Cardiac septum (tissue), 1 donor: ENCODE measurements at regions of chr12 and their contacts with region 1.

Region 1: GRCh38 chr12:21773263-21773741 is 1.2 kb downstream of the KCNJ8 start:
- DNase-seq: peak; percentile 82

Region 2: DNA sequence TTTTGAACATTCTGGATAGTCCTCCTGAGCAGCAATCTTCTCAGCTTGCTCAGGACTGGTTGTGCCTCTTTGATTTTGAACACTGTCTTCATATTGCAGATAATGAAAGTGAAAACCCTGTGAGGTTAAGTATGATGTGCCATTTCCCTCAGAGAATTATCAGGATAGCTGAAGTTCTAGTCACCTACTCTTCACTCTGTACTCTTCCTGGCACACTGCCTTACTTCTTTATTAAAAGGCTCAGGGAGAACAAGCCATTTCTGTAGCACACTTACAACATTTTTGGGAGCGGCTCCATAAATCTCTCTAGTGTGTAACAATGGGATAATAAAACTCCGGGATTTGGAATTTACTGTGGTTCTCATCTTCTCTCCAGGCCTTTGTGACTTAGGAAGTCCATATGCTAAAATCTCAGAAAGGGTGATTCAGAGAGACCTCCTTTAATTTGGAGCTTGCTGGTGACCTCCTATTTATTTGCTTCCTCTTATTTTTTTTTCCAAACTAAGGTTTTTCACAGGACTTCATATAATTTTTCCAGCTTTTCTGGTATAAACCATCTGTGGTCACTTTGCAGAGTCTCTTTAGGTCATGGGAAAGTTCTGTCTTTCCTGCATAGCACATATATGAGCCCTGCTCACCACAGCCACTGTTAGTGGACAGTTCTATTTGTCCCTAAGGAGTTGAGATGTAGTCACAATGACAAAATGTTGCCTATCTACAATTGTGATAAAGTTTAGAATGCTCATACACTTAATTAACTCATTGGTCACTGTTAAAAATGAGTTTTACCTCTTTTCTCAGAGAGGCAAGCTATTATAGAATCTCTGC is 62.1 kb before region 1 on chr12:
- intact Hi-C with region 1: loop called (anchors 5 kb)
- DNase-seq: no peak

Region 3: DNA sequence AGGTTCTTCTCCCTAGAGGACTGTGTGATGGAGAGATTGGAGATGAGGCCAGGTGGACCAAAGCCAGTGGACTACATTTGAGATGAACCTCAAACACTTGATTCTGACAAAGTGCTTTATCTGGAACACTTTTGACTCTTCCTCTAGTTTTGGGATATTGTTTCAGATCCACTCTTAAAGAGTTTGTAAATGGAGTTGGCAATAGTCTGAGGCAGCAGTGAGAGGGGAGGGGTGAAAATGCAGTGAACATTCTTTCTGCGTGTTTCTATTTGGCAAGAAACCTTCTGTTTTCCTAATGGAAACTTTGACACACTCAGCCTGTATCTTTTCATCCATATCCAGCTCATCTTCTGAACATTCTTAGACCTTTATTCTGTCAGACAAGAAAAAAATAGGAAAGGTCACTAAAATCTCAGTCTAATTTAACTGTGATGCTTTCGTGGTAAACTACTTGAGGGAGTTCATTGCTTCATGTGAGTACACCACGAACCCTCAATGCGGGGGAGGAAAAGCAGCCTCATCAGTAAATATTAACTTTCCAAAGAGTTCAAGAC is 58.6 kb after region 1 on chr12:
- intact Hi-C with region 1: loop called (anchors 5 kb)
- DNase-seq: no peak

Region 4: DNA sequence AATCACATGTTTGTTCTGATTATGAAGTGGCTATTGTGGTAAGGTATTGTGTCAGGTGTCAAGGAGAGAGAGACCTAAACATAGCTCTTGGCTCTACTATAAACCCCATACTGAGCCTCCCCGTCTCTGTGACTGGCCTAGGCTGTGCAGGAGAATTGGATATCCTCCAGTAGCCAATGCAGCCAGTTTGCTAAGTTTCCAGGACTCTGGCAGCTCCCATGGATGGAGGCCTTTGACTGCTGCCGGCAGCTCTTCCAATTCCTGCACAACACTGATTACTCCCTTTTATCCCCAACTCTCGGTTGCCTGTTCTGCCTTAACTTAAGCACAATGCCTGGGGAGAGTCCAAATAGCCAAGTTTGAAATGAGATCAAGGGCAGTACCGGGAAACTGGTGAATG is 108.7 kb after region 1 on chr12:
- intact Hi-C with region 1: loop called (anchors 5 kb)
- DNase-seq: peak; percentile 75